ENCODE measurements at regions of chr16 and their contacts with region 1.

Region 1: GRCh38 chr16:69276148-69277115 is 34.7 kb upstream of the VPS4A start:
- DNase-seq: peak; percentile 19 to 51
- ATAC-seq: peak; percentile 84 to 98 (median 96)
- H3K4me3 ChIP-seq: no peak overlapping the region
- H3K27ac ChIP-seq: peak overlapping the region in 6 of 10 donors; percentile 0 to 51 (median 32)
- H3K4me1 ChIP-seq: peaks cover 0 to 27% (median 8%) of the 10 kb centered on the region in 9 donors
- H3K27me3 ChIP-seq: no peaks in the 10 kb centered on the region
- CTCF ChIP-seq: no peak

Region 2: DNA sequence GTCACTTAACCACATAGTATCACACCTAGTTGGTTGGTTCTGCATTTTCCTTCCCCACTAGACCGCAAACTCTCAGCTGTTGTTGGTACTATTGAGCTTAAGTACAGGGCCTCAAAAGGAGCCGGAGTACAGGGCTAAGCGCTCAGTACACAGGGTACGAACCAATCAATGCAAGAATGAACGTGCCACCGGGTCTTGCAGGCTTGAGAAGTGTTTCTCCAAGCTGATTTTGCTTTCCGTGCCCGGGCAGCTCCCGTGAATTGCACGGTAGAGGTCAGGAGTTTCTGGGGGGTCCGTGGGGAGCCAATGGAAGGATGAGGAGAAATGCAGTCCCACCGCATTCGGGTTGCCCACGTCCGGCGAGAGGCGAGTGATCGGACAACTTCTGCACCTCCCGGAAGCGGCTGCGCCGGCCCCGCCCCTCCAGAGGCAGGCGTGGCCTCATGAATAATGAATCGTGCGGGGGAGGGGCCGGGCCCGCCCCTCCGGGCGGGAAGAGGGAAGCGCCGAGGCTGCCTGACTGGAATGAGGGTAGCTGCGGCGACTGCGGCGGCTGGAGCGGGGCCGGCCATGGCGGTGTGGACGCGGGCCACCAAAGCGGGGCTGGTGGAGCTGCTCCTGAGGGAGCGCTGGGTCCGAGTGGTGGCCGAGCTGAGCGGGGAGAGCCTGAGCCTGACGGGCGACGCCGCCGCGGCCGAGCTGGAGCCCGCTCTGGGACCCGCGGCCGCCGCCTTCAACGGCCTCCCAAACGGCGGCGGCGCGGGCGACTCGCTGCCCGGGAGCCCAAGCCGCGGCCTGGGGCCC is 89.6 kb before region 1 on chr16 and contains the start of gene SNTB2:
- intact Hi-C with region 1: loop called in 2 of 10 experiments (anchors 10 kb)
- DNase-seq: peak; percentile 92 to 94
- ATAC-seq: peak; percentile 96 to 99 (median 99)
- H3K4me3 ChIP-seq: peak within 1 kb of the TSS; percentile 61 to 90 (median 78)
- H3K27ac ChIP-seq: peak within 1 kb of the TSS; percentile 78 to 91 (median 86)
- H3K4me1 ChIP-seq: peaks cover 0 to 49% (median 28%) of the 10 kb centered on the region in 9 donors
- H3K27me3 ChIP-seq: no peaks in the 10 kb centered on the region
- CTCF ChIP-seq: no peak
- total RNA-seq, gene SNTB2: 8.1 to 15.7 (median 9.5) TPM

Region 3: DNA sequence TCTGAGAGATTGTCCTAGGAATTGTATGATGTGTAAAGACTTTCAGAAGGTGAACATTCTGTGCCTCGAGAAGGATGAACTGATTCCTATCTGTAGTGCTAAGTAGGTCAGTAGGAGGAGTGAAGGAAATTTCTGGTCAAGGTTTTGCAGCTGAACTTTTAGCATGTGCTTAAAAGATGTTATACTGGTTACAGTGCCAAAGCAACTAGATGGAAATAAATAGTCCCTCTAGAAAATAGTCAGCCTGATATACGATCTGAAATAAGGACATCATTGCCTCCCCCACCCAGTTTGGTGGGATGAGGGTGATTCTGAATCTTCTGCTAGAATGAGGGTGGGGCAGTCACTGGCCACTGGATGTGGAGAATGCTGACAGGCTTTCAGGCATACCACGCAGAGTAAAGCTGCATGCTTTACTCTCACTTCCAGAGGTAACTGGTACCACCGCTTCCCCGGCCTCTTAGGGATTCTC is 22.5 kb before region 1 on chr16:
- intact Hi-C with region 1: loop called in 1 of 10 experiments (anchors 1 kb)
- DNase-seq: no peak
- ATAC-seq: peak in 5 of 8 donors; percentile 33 to 90 (median 52)
- H3K4me3 ChIP-seq: no peak overlapping the region
- H3K27ac ChIP-seq: peak overlapping the region in 4 of 10 donors; percentile 0 to 42 (median 19)
- H3K4me1 ChIP-seq: peaks cover 0 to 9% (median 0%) of the 10 kb centered on the region in 9 donors
- H3K27me3 ChIP-seq: no peaks in the 10 kb centered on the region
- CTCF ChIP-seq: no peak